H1 (cell line): ENCODE measurements at regions of chr21 and their contacts with region 1.

Region 1: DNA sequence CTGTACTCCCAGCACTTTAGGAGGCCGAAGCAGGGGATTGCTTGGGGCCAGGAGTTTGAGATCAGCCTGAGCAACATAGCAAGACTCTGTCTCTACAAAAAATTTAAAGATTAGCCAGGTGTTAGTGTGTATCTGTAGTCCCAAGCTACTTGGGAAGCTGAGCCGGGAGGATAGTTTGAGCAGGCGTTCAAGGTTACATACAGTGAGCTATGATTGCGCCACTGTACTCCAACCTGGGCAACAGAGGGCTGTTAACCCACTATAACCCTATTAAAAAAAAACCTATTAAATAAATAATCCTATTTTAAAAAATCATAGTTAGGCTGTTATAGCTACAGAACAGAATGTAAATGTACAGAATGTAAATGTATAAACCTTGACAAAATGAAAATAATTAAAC is 2.2 kb downstream of the MIS18A start:
- DNase-seq: no peak
- H3K4me3 ChIP-seq: no peak overlapping the region
- H3K27ac ChIP-seq: no peak overlapping the region
- H3K4me1 ChIP-seq: peaks cover 0 to 2% (median 0%) of the 10 kb centered on the region in 4 experiments; a peak in 4 of 7 replicates
- H3K27me3 ChIP-seq: no peaks in the 10 kb centered on the region
- CTCF ChIP-seq: no peak
- EP300 ChIP-seq: no peak
- POLR2A ChIP-seq: no peak
- RAD21 ChIP-seq: no peak

Region 2: GRCh38 chr21:32306021-32306780 is 29.5 kb after region 1 on chr21:
- CTCF ChIA-PET with region 1: interaction called, 10 read pairs
- POLR2A ChIA-PET with region 1: no interaction called
- DNase-seq: peak; percentile 86 to 89
- H3K4me3 ChIP-seq: peak overlapping the region in 1 of 4 experiments; percentile 2; a peak in 1 of 8 replicates
- H3K27ac ChIP-seq: no peak overlapping the region
- H3K4me1 ChIP-seq: peaks cover 0 to 7% (median 4%) of the 10 kb centered on the region in 4 experiments; a peak in 5 of 7 replicates
- H3K27me3 ChIP-seq: no peaks in the 10 kb centered on the region
- CTCF ChIP-seq: peak; percentile 78 to 95 (median 93)
- EP300 ChIP-seq: no peak
- POLR2A ChIP-seq: no peak
- RAD21 ChIP-seq: peak; percentile 71 to 72